A673 (cell line): ENCODE measurements at regions of chr14 and their contacts with region 1.

Region 1: DNA sequence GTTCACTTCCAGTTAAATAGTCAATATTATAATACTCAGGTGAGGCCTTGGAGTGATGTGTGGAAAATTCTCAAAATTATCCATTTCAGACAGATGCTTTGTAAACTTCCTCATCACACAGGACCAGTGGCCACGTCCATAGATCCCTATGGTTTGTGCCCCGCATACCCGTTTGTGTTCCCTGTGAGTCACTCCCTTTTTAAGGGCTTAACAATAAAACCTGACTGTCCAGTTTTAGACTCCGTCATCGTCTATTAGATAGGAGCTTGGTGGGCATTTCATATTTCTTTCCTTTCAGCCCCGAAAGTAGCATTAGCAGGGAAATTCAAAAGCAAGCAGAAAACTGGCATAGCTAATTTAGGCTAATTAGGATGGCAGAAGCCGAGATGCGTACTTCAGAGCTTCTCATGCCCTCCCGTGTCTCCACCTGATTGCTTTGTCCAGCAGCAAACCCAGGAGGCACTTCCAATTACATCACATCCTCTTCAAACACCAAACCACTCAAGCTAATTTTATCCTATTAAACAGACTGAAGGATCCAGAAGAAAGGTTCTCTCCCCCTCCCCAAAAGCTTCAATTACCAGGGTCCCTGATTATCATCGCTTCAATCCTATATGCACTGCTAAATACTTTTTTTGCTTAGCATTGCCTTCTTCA is 186.6 kb upstream of the OTX2 start:
- DNase-seq: no peak
- H3K4me3 ChIP-seq: no peak overlapping the region
- H3K27ac ChIP-seq: no peak overlapping the region
- H3K4me1 ChIP-seq: peaks cover 27% of the 10 kb centered on the region
- H3K27me3 ChIP-seq: no peaks in the 10 kb centered on the region
- CTCF ChIP-seq: no peak

Region 2: GRCh38 chr14:56760164-56760914 is 236.5 kb before region 1 on chr14:
- CTCF ChIA-PET with region 1: no interaction called
- POLR2A ChIA-PET with region 1: no interaction called
- intact Hi-C with region 1: no loop called
- DNase-seq: peak; percentile 82
- H3K4me3 ChIP-seq: no peak overlapping the region
- H3K27ac ChIP-seq: no peak overlapping the region
- H3K4me1 ChIP-seq: peaks cover 28% of the 10 kb centered on the region
- H3K27me3 ChIP-seq: no peaks in the 10 kb centered on the region
- CTCF ChIP-seq: no peak

Region 3: GRCh38 chr14:57009585-57010515 is 13.0 kb after region 1 on chr14:
- CTCF ChIA-PET with region 1: no interaction called
- POLR2A ChIA-PET with region 1: no interaction called
- intact Hi-C with region 1: loop called (anchors 1 kb)
- DNase-seq: peak; percentile 65
- H3K4me3 ChIP-seq: no peak overlapping the region
- H3K27ac ChIP-seq: peak overlapping the region; percentile 95
- H3K4me1 ChIP-seq: peaks cover 48% of the 10 kb centered on the region
- H3K27me3 ChIP-seq: no peaks in the 10 kb centered on the region
- CTCF ChIP-seq: no peak

Region 4: DNA sequence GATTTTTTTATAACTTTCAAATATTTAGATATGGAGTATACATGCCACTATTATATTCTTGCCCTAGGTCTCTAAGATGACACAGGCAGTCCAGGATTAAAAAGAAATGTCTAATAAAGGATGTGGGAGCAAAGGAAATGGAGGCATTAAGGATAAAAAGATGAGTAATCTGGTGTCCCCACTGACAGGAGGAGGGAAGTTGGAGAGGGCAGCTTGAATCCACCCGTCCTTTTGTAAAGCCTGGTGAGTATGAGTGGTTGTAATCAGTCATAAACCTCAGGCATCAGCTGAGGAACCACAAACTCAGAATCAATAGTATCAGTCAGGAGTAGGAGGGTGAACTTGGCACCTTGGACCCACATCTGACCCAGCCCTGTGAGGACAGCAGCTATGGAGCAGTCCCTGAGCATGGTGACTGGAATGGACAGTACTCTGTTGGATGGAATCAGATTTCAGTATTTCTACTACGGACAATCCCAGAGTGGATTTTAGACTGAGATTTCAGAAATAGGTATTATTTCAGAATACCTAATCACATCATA is 171.3 kb after region 1 on chr14:
- CTCF ChIA-PET with region 1: no interaction called
- POLR2A ChIA-PET with region 1: no interaction called
- intact Hi-C with region 1: no loop called
- DNase-seq: peak; percentile 38
- H3K4me3 ChIP-seq: no peak overlapping the region
- H3K27ac ChIP-seq: no peak overlapping the region
- H3K4me1 ChIP-seq: peaks cover 7% of the 10 kb centered on the region
- H3K27me3 ChIP-seq: no peaks in the 10 kb centered on the region
- CTCF ChIP-seq: no peak

Region 5: GRCh38 chr14:57268161-57269069 is 271.5 kb after region 1 on chr14 and contains the starts of genes AP5M1 and EXOC5:
- CTCF ChIA-PET with region 1: no interaction called
- POLR2A ChIA-PET with region 1: no interaction called
- intact Hi-C with region 1: no loop called
- DNase-seq: peak; percentile 98
- H3K4me3 ChIP-seq: peak within 1 kb of the TSS; percentile 63
- H3K27ac ChIP-seq: peak within 1 kb of the TSS; percentile 94
- H3K4me1 ChIP-seq: peaks cover 12% of the 10 kb centered on the region
- H3K27me3 ChIP-seq: no peaks in the 10 kb centered on the region
- CTCF ChIP-seq: 0 out of 2 replicates have a peak, but pooled peaks have one; percentile 1
- total RNA-seq, gene AP5M1: 54.1 and 58.7 TPM in 2 replicates
- total RNA-seq, gene EXOC5: 132 TPM in 2 replicates